WTC11 (cell line): ENCODE measurements at regions of chr11 and their contacts with region 1.

Region 1: DNA sequence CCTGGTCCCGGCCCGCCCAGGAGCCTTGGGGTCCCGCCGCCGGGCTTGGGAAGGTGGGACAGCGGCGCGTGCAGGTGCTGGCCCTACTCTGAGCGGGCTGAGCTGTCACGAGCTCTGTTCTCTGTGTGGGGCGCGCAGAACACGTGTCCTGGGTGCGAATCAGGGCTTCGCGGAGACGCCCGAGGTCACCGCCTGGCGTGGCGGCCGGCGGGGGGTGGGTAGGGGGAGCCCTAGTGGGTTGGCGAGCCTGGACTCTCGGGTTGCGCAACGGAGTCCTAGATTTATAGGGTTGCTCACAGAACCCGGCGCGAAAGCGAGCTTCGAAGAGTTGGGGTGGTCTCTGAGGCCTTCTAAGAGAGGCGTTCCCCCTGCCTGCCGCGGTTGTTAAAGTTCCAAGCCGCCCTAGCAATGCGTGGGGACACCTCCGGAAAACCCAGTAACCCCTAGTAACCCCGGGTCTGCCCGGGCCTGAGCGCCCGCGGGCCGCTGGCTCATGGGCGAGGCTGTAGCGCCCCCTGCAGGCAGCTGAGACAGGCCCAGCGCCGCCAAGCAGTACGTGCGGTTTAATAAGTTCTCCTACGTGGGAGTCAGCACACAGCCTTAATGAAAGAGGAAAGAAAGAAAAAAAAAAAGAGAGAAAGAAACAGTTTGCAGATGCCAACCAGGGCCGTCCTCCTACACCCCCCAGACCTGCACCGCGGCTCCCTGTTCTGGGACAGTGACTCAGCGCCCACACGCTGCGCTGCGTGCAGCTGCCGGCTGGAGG is 2.8 kb downstream of the ADM start:
- DNase-seq: peak; percentile 86
- ATAC-seq: peak; percentile 21
- H3K4me3 Mint-ChIP-seq: peak overlapping the region; percentile 97
- H3K27ac Mint-ChIP-seq: peak overlapping the region; percentile 91
- H3K4me1 Mint-ChIP-seq: peaks cover 36% of the 10 kb centered on the region
- H3K27me3 Mint-ChIP-seq: peaks cover 37% of the 10 kb centered on the region
- CTCF ChIP-seq: peak; percentile 100

Region 2: DNA sequence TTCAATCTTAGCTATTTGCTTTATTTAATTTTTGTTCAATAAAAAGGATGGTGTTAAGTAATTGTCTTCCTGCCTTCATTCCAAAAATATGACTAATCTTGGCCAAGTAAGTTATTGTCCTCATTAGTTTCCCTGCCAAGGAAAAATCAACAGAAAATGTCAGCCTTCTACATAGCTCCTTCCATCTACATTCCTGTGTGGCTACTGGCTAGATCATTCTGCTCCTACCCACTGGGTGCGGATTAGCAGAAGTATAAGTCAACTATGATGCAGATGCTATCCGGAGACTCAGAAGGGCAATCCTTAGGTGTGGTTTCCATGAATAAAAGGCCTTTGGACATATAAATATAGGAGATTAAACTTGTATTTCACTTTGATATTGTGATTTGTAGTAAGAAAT is 168.0 kb before region 1 on chr11:
- CTCF ChIA-PET with region 1: interaction called, 10 read pairs
- POLR2A ChIA-PET with region 1: no interaction called
- DNase-seq: no peak
- ATAC-seq: peak; percentile 72
- H3K4me3 Mint-ChIP-seq: no peak overlapping the region
- H3K27ac Mint-ChIP-seq: peak overlapping the region; percentile 30
- H3K4me1 Mint-ChIP-seq: peaks cover 15% of the 10 kb centered on the region
- H3K27me3 Mint-ChIP-seq: no peaks in the 10 kb centered on the region
- CTCF ChIP-seq: no peak

Region 3: DNA sequence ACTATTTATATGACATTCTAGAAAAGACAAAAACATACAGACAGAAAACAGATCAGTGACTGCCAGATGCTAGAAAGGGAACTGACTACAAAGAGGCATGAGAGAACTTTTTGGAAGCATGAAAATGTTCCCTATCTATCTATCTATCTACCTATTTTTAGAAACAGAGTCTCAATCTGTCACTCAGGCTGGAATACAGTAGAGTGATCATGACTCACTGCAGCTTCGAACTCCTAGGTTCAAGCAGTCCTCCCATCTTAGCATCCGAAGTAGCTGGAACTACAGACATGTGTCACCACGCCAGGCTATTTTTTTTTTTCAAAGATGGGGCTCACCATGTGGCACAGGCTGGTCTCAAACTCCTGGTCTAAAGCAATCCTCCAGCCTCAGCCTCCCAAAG is 20.5 kb before region 1 on chr11:
- CTCF ChIA-PET with region 1: interaction called, 10 read pairs
- POLR2A ChIA-PET with region 1: interaction called, 3 read pairs
- DNase-seq: no peak
- ATAC-seq: no peak
- H3K4me3 Mint-ChIP-seq: no peak overlapping the region
- H3K27ac Mint-ChIP-seq: no peak overlapping the region
- H3K4me1 Mint-ChIP-seq: peaks cover 26% of the 10 kb centered on the region
- H3K27me3 Mint-ChIP-seq: no peaks in the 10 kb centered on the region
- CTCF ChIP-seq: no peak

Region 4: DNA sequence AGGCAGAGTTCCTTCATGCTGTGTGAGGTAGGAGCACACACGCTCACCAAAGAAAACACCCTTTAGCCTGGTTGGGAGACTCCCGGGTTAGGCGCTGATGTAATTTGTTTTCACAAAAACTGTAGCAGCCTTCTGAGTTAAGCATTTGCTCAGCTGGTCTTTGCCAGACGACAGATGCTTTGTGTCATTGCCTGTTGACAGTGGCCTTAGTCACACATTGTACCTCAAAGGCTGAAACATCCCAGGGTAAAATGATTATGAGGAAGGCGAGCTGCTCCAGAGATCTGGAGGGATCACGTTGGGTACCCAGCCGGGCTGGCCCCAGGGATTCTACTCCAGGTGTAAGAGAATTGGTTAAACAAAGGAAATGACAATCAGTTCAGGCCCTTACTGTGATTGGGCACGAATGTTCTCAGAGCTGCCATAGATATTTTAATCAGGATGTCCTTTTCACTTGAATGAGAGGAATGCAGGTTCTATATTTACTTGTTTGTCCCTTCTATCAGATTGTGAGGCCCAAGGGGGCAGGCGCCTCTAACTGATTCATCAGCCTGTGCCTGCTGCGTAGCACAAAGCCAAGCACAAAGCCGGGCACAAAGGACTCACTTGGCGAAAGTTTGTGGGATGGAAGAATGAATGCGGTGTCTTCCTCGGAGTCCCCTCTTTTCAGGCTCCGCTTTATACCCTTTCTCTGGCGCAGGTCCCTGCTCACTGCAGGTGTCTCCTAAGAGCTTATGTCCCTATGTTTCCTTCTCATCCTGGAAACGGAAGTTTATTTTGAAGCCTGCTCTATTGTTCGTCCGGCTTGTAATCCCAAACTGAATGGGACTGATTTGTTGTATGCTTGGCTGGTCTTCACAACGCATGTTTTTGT is 44.4 kb after region 1 on chr11:
- CTCF ChIA-PET with region 1: interaction called, 42 read pairs
- POLR2A ChIA-PET with region 1: interaction called, 37 read pairs
- DNase-seq: peak; percentile 84
- ATAC-seq: peak; percentile 89
- H3K4me3 Mint-ChIP-seq: peak overlapping the region; percentile 55
- H3K27ac Mint-ChIP-seq: peak overlapping the region; percentile 100
- H3K4me1 Mint-ChIP-seq: peaks cover 68% of the 10 kb centered on the region
- H3K27me3 Mint-ChIP-seq: no peaks in the 10 kb centered on the region; the same call in 1 of the 2 replicates
- CTCF ChIP-seq: no peak

Region 5: DNA sequence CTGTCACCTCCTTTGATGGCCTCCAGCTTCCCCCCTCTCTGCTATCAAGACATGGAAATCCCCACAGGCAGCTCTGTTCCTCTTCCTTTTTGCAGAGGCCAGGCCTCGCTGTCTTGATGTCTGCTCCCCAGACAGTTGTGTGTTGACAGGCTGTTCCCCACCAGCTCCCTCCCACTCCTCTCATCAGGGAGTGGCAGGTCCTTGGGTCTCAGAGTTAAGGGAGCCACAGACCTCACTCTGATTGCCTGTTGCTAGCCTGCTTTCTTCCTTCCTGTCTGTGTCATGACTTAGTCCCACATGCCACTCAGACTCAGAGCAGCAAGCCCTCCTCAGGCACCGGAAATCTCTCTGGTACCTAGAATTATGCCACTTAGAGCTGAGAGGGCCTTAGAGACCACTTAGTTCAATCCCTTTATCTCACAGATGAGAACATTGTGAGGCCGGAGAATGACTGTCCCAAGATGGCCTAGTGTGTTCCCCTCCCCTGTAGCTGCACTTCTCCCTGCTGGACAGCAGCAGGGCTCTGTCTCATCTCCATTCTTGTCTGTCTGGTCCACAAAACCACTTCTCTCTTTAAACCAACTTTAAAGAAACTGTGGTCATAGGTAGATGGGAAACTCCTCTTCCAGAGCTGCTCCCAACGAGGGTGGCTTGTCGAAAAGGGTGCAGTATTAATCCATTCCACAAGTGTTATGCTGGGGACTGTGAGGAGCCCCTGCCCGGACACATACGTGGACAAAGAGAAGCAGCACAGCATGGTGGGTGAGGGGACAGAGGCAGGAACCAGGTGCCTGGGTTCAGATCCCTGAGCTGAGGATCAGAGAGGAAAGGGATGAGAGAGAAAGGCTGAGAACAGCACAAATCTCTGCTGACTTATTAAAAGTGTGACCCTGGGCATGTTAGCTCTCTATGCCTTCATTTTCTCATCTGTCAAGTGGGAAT is 151.7 kb after region 1 on chr11:
- CTCF ChIA-PET with region 1: no interaction called
- POLR2A ChIA-PET with region 1: no interaction called
- DNase-seq: no peak
- ATAC-seq: no peak
- H3K4me3 Mint-ChIP-seq: no peak overlapping the region
- H3K27ac Mint-ChIP-seq: peak overlapping the region; percentile 30; the same call in 1 of the 2 replicates
- H3K4me1 Mint-ChIP-seq: peaks cover 30% of the 10 kb centered on the region
- H3K27me3 Mint-ChIP-seq: peaks cover 2% of the 10 kb centered on the region; the same call in 1 of the 2 replicates
- CTCF ChIP-seq: no peak